Sciatic nerve (tissue), 2 donors: ENCODE measurements at regions of chr11 and their contacts with region 1.

Region 1: GRCh38 chr11:7385532-7385931 is 99.8 kb upstream of the OLFML1 start:
- DNase-seq: no peak
- ATAC-seq: no peak

Region 2: GRCh38 chr11:8180469-8180868 is 794.9 kb after region 1 on chr11:
- intact Hi-C with region 1: loop called (anchors 10 kb)
- DNase-seq: no peak
- ATAC-seq: no peak